ENCODE measurements at regions of chrX and their contacts with region 1.

Region 1: DNA sequence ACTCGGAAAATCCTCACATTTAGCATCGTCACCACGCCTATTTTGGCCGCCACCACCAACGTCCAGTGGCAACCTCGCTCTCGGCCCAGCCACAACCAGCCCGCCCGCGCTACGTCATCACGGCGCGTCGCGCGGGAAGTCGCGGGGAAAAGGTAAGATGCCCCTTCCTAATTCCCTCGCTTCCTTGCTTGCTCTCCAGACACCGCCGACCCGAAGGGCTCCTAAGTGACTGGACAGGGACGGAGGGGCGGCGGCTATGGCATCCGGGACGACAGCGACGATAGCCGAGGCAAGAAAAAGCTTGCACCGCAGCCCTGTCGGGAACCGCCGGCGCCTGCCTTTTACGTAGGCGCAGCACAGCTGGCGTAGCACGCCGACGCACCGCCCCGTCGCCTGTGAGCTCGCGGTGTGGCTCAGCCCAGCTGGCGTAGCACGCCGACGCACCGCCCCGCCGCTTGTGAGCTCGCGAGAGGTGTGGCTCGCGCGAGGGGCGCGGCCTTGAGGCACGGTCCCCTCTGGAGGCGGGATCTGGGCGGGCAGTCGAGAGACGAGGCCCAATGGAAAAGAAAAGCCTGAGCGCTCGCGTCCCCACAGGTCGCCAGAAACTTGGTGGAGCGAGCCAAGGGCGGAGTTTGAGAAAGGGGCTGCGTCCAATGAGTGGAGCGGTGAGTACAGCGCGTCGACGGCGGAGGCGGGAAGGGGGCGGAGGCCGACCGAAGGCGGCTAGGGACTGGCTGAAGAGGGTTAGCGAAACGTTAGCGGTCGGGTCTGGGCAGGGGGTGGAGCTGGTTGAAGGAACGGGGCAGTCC is at the start of gene HDAC6:
- DNase-seq: peak; percentile 95
- H3K4me3 Mint-ChIP-seq: peak within 1 kb of the TSS; percentile 91
- H3K27ac Mint-ChIP-seq: peak within 1 kb of the TSS; percentile 97
- H3K4me1 Mint-ChIP-seq: peaks cover 18% of the 10 kb centered on the region
- H3K27me3 Mint-ChIP-seq: no peaks in the 10 kb centered on the region
- total RNA-seq, gene HDAC6: 73.9 and 77.7 TPM in 2 replicates

Region 2: GRCh38 chrX:48597353-48598264 is 203.9 kb before region 1 on chrX and contains the start of gene WDR13:
- intact Hi-C with region 1: loop called (anchors 5 kb)
- DNase-seq: peak; percentile 86
- H3K4me3 Mint-ChIP-seq: peak within 1 kb of the TSS; percentile 94
- H3K27ac Mint-ChIP-seq: peak within 1 kb of the TSS; percentile 99
- H3K4me1 Mint-ChIP-seq: peaks cover 6% of the 10 kb centered on the region
- H3K27me3 Mint-ChIP-seq: no peaks in the 10 kb centered on the region
- total RNA-seq, gene WDR13: 43.4 and 44.7 TPM in 2 replicates

Region 3: DNA sequence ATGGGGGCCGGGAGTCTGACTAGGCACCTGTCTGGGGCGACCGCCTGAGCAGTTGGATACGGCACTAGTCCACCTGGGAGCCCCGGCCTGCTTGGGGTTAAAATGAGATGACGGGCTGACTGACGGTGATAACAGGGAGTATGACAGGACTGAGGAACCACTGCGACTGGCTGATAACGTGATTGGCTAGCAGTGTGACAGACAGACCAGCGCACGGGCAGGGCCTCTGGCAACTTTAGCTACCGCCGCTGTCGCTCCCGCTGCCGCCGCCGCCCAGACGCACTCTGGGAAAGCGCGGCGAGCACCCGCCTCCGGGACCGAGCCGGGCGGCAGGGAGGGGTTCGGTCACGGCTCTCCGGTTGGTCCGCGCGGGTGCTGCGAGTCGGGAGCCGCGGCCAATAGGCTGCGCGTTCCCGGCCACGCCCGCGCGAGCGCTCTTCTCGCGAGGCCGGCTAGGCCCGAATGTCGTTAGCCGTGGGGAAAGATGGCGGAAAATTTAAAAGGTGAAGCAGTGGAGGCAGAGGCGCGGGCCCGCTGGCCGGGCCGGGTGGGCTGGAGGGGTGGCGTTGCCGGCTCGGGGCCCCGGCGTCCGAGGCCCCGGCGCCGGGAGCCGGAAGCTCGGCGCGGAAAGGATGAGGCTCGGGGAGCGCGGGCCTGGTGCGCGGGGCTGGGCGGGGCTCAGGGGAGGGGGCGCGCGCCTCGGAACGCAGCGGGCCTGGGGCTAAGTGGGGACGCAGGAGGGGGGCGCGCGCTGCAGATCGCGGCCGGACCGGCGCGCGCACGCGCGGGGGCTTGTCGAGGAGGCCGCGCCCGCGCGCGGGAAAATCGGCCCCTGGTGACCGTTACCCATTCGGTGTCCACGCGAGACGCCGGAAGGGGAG is 104.9 kb before region 1 on chrX and contains the start of gene SUV39H1:
- intact Hi-C with region 1: loop called (anchors 1 kb)
- DNase-seq: peak; percentile 84
- H3K4me3 Mint-ChIP-seq: peak within 1 kb of the TSS; percentile 94
- H3K27ac Mint-ChIP-seq: peak within 1 kb of the TSS; percentile 94
- H3K4me1 Mint-ChIP-seq: peaks cover 26% of the 10 kb centered on the region
- H3K27me3 Mint-ChIP-seq: no peaks in the 10 kb centered on the region
- total RNA-seq, gene SUV39H1: 28.8 and 29.6 TPM in 2 replicates

Region 4: DNA sequence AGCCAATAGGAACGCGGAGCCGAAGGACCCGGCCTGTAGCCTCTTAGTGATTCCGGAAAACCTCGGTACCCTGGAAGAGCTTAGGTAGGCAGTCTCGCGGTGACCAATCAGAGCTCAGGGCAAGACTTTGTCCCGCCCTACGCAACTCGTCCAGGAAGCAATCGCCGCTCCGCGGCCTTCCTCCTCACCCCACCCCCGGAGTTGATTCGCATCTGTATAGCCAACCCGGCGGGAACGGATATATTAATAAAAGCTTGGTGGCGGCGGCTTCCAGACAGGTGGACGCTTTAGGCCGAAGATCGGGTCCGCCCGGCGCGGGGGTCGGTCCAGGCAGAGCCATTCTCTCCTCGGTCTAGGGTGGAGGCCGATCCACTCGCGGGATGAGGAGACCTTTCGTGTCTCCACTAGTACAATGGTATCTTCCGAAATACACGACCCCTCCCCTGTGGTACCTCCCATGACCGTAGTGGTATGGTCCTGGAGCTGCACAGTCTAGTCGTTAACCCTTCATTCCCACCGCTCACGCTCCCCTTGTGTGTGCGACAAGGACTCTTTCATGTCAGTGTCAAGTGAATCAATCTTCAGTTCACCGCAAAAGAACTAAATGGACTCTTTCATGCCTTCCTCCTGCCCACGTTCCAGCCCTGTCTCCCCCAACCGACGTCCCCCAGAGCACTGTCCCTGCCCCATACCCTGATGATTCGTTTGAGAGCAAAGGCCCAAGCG is 64.1 kb before region 1 on chrX:
- intact Hi-C with region 1: loop called (anchors 2 kb)
- DNase-seq: peak; percentile 86
- H3K4me3 Mint-ChIP-seq: peak overlapping the region; percentile 89
- H3K27ac Mint-ChIP-seq: peak overlapping the region; percentile 93
- H3K4me1 Mint-ChIP-seq: peaks cover 15% of the 10 kb centered on the region
- H3K27me3 Mint-ChIP-seq: no peaks in the 10 kb centered on the region

Region 5: DNA sequence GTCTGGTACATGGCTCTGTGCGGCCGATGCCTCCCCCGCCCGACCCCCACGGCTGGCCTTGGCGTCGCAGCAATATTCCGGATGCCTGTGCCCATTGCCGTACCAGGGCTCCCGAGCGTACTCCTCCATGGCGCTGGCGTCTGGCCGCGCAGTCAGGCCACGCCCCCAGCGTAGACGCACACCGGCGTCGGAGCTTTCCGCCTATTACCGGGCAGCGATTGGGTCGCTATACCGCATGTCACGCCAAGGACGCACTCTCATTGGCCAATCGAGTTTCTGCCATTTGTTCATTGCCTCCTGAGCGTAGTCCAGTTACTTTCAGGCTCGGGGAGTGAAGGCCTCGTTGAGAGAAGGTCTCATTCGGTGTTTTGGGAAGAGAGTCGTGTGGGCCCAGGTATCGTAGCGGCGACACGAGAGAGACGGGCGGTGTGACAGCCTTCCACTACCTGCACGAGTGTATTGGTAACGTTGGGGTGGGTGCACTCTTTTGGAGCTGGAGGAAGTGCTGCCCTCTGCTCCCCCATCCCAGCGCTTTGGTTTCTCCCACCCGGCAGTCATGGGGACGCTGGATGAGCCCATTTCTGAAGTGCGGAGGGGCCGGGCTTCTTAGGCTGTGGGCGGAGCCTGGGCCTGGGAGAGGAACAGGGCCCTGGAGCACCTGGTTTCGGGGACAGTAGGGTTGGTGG is 96.3 kb after region 1 on chrX and contains the starts of genes PQBP1 and TIMM17B:
- intact Hi-C with region 1: loop called (anchors 5 kb)
- DNase-seq: peak; percentile 85
- H3K4me3 Mint-ChIP-seq: peak within 1 kb of the TSS; percentile 97
- H3K27ac Mint-ChIP-seq: peak within 1 kb of the TSS; percentile 100
- H3K4me1 Mint-ChIP-seq: peaks cover 14% of the 10 kb centered on the region
- H3K27me3 Mint-ChIP-seq: no peaks in the 10 kb centered on the region
- total RNA-seq, gene PQBP1: 97.3 and 103 TPM in 2 replicates
- total RNA-seq, gene TIMM17B: 66.2 and 71.6 TPM in 2 replicates

Region 6: GRCh38 chrX:48957827-48958634 is 156.5 kb after region 1 on chrX:
- intact Hi-C with region 1: loop called (anchors 5 kb)
- DNase-seq: peak; percentile 91
- H3K4me3 Mint-ChIP-seq: peak overlapping the region; percentile 99
- H3K27ac Mint-ChIP-seq: peak overlapping the region; percentile 100
- H3K4me1 Mint-ChIP-seq: peaks cover 34% of the 10 kb centered on the region
- H3K27me3 Mint-ChIP-seq: no peaks in the 10 kb centered on the region

Region 7: DNA sequence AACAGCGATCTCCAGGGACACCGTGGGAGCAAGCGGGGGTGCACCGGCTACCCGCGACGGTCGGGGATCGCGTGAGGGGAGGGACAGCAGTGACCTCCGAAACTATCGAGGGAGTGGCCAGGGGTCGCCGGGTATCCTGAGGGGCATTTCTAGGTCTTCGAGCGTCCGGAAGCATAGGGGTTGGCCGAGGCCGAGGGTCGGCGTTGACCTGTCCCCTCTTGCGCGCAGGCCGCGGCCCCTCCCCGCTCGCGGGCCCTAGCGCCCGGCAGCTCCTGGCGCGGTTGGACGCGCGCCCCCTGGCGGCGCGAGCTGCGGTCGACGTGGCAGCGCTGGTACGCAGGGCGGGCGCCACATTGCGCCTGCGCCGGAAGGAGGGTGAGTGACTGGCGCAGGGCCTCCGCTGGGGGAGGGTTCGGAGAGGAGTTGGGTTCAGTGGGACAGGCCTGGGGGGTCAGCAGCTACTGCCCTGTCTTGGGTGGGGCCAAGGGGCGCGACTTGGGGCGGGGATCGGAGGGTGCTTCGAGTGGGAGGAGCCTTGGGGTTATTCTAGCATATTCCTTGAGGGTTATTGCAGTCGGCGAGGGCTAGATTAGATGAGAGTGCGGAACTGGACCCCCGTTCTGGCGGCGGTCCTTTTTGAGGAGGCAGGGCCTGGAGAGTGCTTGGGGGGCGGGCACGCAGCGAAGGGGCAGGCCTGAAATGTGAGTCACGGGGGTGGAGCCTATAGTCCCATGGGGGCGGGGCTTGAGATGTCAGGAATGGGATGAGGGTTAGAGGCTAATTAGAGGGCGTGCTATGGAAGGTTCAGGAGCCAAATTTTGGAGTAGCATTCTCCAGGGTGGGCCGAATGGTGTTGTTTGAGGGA is 362.3 kb after region 1 on chrX:
- intact Hi-C with region 1: loop called (anchors 10 kb)
- DNase-seq: peak; percentile 80
- H3K4me3 Mint-ChIP-seq: peak overlapping the region; percentile 76
- H3K27ac Mint-ChIP-seq: peak overlapping the region; percentile 91
- H3K4me1 Mint-ChIP-seq: peaks cover 24% of the 10 kb centered on the region
- H3K27me3 Mint-ChIP-seq: no peaks in the 10 kb centered on the region